CD4-positive, alpha-beta memory T cell (primary cell): ENCODE measurements at regions of chr6 and their contacts with region 1.

Region 1: GRCh38 chr6:158631678-158632537 is 12.6 kb downstream of the DYNLT1 start:
- DNase-seq: peak in 1 of 5 donors; percentile 12
- H3K4me3 ChIP-seq: no peak overlapping the region
- H3K4me3 Mint-ChIP-seq: no peak overlapping the region
- H3K27ac ChIP-seq: no peak overlapping the region
- H3K27ac Mint-ChIP-seq: peak overlapping the region; percentile 68 to 96 (median 94)
- H3K4me1 ChIP-seq: peaks cover 31% of the 10 kb centered on the region
- H3K4me1 Mint-ChIP-seq: peaks cover 24 to 52% (median 40%) of the 10 kb centered on the region in 4 donors
- H3K27me3 ChIP-seq: no peaks in the 10 kb centered on the region
- H3K27me3 Mint-ChIP-seq: no peaks in the 10 kb centered on the region

Region 2: DNA sequence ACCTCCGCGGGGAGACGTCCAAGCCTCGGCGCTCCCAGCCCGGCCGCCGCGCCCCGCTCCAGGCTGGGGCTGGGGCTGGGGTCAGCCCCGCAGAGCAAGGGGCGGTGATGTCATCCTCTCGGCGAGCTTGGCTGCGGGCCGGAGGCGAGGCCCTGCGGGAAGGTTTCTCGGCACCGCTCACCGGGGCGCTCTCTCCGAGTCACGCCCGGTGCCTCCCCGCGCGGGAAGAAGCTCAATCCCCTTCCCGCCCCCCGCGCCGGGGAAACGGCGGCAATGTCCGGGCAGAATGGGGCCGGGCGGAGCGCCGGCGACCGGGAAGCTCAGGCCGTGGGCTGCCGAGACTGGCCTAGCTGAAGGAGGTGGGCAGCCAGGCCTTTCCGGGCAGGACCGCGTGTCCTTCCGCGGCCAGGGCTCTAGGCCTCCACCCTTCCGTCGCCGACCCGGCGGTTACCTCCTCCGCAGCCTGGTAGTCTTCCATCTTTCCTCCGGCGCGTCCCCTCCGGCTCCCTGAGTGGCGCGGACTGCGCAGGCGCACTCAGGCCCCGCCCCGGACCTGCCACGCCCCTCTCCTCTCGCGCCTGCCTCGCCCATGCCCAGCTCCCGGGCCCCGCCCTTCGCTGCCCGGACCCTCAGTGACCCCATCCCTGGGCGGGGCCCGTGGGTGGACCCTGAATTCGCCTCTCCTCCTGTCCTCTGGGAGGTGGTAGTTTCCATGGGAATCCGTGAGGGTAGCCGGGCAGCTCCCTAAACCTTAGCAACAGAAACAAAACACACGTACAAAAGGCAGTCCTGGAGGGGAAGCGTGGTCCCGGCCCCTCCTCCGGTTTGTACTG is 12.5 kb after region 1 on chr6 and contains the start of gene DYNLT1:
- CTCF ChIA-PET with region 1: interaction called, 3 read pairs
- POLR2A ChIA-PET with region 1: interaction called, 22 read pairs
- intact Hi-C with region 1: loop called (anchors 1 kb)
- DNase-seq: peak; percentile 78 to 95 (median 88)
- H3K4me3 ChIP-seq: peak within 1 kb of the TSS; percentile 84 to 85
- H3K4me3 Mint-ChIP-seq: peak within 1 kb of the TSS; percentile 99 to 100 (median 99)
- H3K27ac ChIP-seq: peak within 1 kb of the TSS; percentile 96
- H3K27ac Mint-ChIP-seq: peak within 1 kb of the TSS; percentile 92 to 100 (median 99)
- H3K4me1 ChIP-seq: peaks cover 58% of the 10 kb centered on the region
- H3K4me1 Mint-ChIP-seq: peaks cover 46 to 82% (median 55%) of the 10 kb centered on the region in 4 donors
- H3K27me3 ChIP-seq: no peaks in the 10 kb centered on the region
- H3K27me3 Mint-ChIP-seq: no peaks in the 10 kb centered on the region
- total RNA-seq, gene DYNLT1: 78.8 to 90.4 TPM

Region 3: DNA sequence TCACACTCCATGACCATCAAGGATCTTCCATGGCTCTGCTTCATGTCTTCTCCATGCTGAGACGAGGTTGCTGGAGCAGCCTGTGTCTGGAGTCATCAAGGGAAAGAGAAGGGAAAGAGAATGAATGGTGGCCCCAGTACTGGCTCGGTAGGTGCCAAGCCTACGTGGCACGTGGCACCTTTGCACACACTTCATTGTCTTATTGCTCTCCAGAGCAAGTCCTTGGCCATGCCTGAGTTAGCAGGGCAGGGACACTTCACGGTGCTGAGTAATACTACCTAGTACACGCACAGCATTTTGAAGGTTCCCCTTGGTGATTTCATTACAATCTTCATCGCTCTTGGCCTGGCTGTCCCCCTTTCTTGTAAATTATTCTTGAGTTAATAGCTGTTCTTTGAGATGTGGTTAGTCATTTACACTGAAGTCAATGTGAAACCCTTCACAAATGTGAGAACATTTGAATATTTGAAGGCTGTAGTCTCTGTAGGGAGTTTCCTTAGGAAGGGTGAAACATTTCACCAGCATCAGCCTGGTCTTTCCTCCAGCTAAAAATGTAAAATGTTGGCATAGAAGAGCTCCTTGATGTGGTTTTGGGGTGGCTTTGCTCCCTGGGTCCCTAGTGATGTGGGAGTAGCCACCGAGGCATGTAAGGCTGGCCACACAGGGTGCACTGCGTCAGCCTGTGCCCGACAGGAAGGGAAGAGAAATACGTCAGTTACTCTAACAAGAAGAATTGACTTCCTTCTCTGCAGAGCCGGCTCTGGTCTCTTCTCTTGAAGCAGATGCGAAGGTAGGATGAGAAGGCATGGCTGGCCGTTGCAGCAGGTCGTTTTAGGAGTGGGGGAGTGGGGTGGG is 17.6 kb after region 1 on chr6 and contains the start of gene SYTL3:
- CTCF ChIA-PET with region 1: no interaction called
- POLR2A ChIA-PET with region 1: interaction called, 22 read pairs
- intact Hi-C with region 1: loop called (anchors 2 kb)
- DNase-seq: peak; percentile 92 to 94 (median 92)
- H3K4me3 ChIP-seq: peak within 1 kb of the TSS in 1 of 2 donors; percentile 26
- H3K4me3 Mint-ChIP-seq: peak within 1 kb of the TSS; percentile 69 to 89 (median 84)
- H3K27ac ChIP-seq: peak within 1 kb of the TSS; percentile 66
- H3K27ac Mint-ChIP-seq: peak within 1 kb of the TSS; percentile 82 to 98 (median 94)
- H3K4me1 ChIP-seq: peaks cover 57% of the 10 kb centered on the region
- H3K4me1 Mint-ChIP-seq: peaks cover 49 to 77% (median 58%) of the 10 kb centered on the region in 4 donors
- H3K27me3 ChIP-seq: no peaks in the 10 kb centered on the region
- H3K27me3 Mint-ChIP-seq: no peaks in the 10 kb centered on the region
- total RNA-seq, gene SYTL3: 22.2 to 24.3 TPM

Region 4: GRCh38 chr6:159461256-159461655 is 829.3 kb after region 1 on chr6:
- CTCF ChIA-PET with region 1: no interaction called
- POLR2A ChIA-PET with region 1: no interaction called
- intact Hi-C with region 1: no loop called
- DNase-seq: no peak
- H3K4me3 ChIP-seq: no peak overlapping the region
- H3K4me3 Mint-ChIP-seq: no peak overlapping the region
- H3K27ac ChIP-seq: no peak overlapping the region
- H3K27ac Mint-ChIP-seq: no peak overlapping the region
- H3K4me1 ChIP-seq: no peaks in the 10 kb centered on the region
- H3K4me1 Mint-ChIP-seq: no peaks in the 10 kb centered on the region
- H3K27me3 ChIP-seq: peaks cover 2% of the 10 kb centered on the region
- H3K27me3 Mint-ChIP-seq: peaks cover 7 to 9% of the 10 kb centered on the region in 2 donors